WTC11 (cell line): ENCODE measurements at regions of chr4 and their contacts with region 1.

Region 1: DNA sequence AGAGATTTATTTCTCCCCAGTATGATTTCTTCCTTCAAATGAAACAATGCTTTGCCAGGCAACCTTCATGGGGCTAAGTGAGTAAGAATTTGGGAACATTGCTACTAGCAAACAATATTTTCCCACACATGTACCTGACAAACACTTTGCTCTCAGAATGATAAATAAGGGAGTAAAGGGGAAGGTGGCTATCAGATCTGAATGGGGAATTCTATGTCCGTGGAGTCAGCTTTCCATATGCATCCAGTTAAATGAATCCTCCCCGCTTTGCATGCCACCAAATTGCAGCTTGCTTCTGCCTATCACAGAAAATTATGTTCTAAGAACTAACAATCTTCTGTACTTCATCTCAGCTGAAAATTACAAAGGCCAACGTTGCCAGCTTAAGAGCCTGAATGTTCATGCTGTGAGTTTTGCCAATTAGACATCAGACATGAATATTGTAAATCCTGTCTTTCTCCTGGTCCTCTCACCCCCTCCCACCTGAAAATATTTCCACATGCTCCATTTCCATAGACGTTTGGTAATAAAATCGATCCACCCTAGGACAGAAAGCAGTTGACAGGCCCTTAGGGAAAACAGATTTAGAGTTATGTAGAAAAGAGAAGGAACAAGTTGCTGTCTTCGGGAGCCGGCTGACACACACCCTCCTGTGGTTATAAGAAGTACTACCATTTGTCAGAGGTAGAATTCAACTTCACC is 6.3 kb downstream of the MEPE start:
- DNase-seq: no peak
- ATAC-seq: peak; percentile 68
- H3K4me3 Mint-ChIP-seq: no peak overlapping the region
- H3K27ac Mint-ChIP-seq: no peak overlapping the region; the same call in 1 of the 2 replicates
- H3K4me1 Mint-ChIP-seq: peaks cover 25% of the 10 kb centered on the region
- H3K27me3 Mint-ChIP-seq: no peaks in the 10 kb centered on the region
- CTCF ChIP-seq: peak; percentile 77

Region 2: GRCh38 chr4:87353592-87353991 is 485.4 kb before region 1 on chr4:
- CTCF ChIA-PET with region 1: interaction called, 21 read pairs
- POLR2A ChIA-PET with region 1: no interaction called
- DNase-seq: peak; percentile 52
- ATAC-seq: peak; percentile 86
- H3K4me3 Mint-ChIP-seq: no peak overlapping the region
- H3K27ac Mint-ChIP-seq: no peak overlapping the region
- H3K4me1 Mint-ChIP-seq: peaks cover 16% of the 10 kb centered on the region
- H3K27me3 Mint-ChIP-seq: no peaks in the 10 kb centered on the region
- CTCF ChIP-seq: peak; percentile 51

Region 3: DNA sequence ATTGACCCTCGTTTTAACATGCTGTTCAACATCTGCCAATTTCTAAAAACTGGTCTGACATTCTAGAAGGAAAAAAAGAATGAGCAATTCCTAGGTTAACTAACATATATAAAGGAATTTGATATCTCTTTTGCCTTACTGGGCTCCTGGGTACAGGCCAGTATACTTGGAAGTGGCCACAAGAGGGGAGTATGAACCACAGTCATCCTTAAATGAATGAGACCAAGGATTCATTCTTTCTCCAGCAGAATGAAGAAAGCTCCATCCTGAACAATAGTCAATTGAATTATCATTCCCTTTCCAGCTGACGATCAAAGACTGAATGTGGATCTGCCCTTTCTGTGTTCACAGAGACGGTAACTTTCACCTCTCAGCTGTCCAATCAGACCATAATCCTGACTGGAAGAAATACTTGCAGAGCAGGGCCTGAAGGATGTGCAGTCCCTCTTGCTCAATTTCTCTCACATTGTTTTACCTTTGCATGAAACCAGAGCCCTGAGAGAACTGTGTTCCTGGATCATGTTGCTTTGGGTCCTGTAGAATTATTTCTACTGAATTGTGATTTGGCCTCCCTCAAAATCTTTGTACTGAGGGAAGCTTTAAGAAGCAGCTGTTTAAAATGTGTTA is 295.1 kb before region 1 on chr4:
- CTCF ChIA-PET with region 1: interaction called, 68 read pairs
- POLR2A ChIA-PET with region 1: no interaction called
- DNase-seq: peak; percentile 23
- ATAC-seq: peak; percentile 94
- H3K4me3 Mint-ChIP-seq: no peak overlapping the region
- H3K27ac Mint-ChIP-seq: 0 out of 2 replicates have a peak overlapping the region, but pooled peaks have one; percentile 53
- H3K4me1 Mint-ChIP-seq: peaks cover 18% of the 10 kb centered on the region
- H3K27me3 Mint-ChIP-seq: no peaks in the 10 kb centered on the region; the same call in 1 of the 2 replicates
- CTCF ChIP-seq: peak; percentile 38

Region 4: GRCh38 chr4:87679449-87680169 is 159.4 kb before region 1 on chr4:
- CTCF ChIA-PET with region 1: interaction called, 102 read pairs
- POLR2A ChIA-PET with region 1: no interaction called
- DNase-seq: peak; percentile 72
- ATAC-seq: peak; percentile 81
- H3K4me3 Mint-ChIP-seq: peak overlapping the region; percentile 45
- H3K27ac Mint-ChIP-seq: peak overlapping the region; percentile 89
- H3K4me1 Mint-ChIP-seq: peaks cover 37% of the 10 kb centered on the region
- H3K27me3 Mint-ChIP-seq: no peaks in the 10 kb centered on the region; the same call in 1 of the 2 replicates
- CTCF ChIP-seq: peak; percentile 85

Region 5: GRCh38 chr4:87819281-87819919 is 19.6 kb before region 1 on chr4:
- CTCF ChIA-PET with region 1: interaction called, 26 read pairs
- POLR2A ChIA-PET with region 1: no interaction called
- DNase-seq: peak; percentile 23
- ATAC-seq: peak; percentile 80
- H3K4me3 Mint-ChIP-seq: no peak overlapping the region
- H3K27ac Mint-ChIP-seq: 0 out of 2 replicates have a peak overlapping the region, but pooled peaks have one; percentile 12
- H3K4me1 Mint-ChIP-seq: peaks cover 20% of the 10 kb centered on the region
- H3K27me3 Mint-ChIP-seq: no peaks in the 10 kb centered on the region; the same call in 1 of the 2 replicates
- CTCF ChIP-seq: no peak

Region 6: DNA sequence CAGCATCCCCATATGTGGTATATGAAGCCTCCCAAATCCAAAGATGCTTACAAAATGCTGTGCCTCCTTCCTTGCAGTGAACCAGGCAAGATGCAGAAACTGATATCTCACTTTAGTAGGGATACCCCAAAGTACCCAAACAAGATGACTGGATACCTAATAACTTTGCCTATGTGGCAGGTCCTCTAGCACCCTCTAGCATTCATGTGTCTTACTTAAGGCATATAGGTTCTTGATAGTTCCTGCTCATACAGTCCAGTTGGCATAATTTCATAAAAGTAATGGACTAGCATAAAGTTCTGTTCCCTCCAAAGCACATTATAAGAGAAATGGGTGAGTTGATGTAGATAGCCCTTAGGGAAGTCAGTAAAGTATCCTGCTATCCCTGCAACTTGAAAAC is 99.7 kb after region 1 on chr4:
- CTCF ChIA-PET with region 1: no interaction called
- POLR2A ChIA-PET with region 1: no interaction called
- DNase-seq: no peak
- ATAC-seq: no peak
- H3K4me3 Mint-ChIP-seq: no peak overlapping the region
- H3K27ac Mint-ChIP-seq: no peak overlapping the region
- H3K4me1 Mint-ChIP-seq: peaks cover 41% of the 10 kb centered on the region
- H3K27me3 Mint-ChIP-seq: peaks cover 10% of the 10 kb centered on the region
- CTCF ChIP-seq: no peak